Esophagus squamous epithelium (tissue), 5 donors: ENCODE measurements at regions of chr17 and their contacts with region 1.

Region 1: GRCh38 chr17:55356434-55357328 is 65.0 kb downstream of the MMD start:
- DNase-seq: no peak
- H3K4me3 ChIP-seq: no peak overlapping the region
- H3K27ac ChIP-seq: no peak overlapping the region
- H3K4me1 ChIP-seq: no peaks in the 10 kb centered on the region
- H3K27me3 ChIP-seq: no peaks in the 10 kb centered on the region
- CTCF ChIP-seq: peak; percentile 70 to 81 (median 75)
- POLR2A ChIP-seq: no peak

Region 2: GRCh38 chr17:54992797-54993639 is 363.7 kb before region 1 on chr17:
- intact Hi-C with region 1: loop called (anchors 5 kb)
- DNase-seq: no peak
- H3K4me3 ChIP-seq: no peak overlapping the region
- H3K27ac ChIP-seq: no peak overlapping the region
- H3K4me1 ChIP-seq: no peaks in the 10 kb centered on the region
- H3K27me3 ChIP-seq: no peaks in the 10 kb centered on the region
- CTCF ChIP-seq: peak in 5 of 6 experiments; percentile 52 to 73 (median 62)
- POLR2A ChIP-seq: no peak

Region 3: DNA sequence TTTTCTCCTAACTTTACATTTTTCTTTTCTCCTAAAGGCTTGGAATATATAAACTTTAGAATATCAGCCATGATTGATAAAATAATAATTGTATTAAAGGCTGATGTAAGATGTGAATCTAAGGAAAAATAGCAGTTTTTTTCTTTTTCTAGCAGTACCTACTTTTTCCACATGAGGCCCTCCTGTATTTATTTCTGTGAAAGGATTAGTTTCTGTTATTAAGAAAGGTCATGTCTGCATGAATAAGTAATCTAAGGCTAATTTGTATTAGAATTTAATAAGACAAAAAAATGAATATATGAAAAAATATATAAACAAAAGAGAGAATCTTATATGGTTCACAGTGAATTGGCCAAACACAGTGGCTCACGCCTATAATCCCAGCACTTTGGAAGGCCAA is 302.8 kb before region 1 on chr17:
- intact Hi-C with region 1: loop called (anchors 10 kb)
- DNase-seq: no peak
- H3K4me3 ChIP-seq: no peak overlapping the region
- H3K27ac ChIP-seq: no peak overlapping the region
- H3K4me1 ChIP-seq: peaks cover 0 to 35% (median 0%) of the 10 kb centered on the region in 3 donors
- H3K27me3 ChIP-seq: no peaks in the 10 kb centered on the region
- CTCF ChIP-seq: peak in 4 of 6 experiments; percentile 46 to 76 (median 59)
- POLR2A ChIP-seq: no peak

Region 4: DNA sequence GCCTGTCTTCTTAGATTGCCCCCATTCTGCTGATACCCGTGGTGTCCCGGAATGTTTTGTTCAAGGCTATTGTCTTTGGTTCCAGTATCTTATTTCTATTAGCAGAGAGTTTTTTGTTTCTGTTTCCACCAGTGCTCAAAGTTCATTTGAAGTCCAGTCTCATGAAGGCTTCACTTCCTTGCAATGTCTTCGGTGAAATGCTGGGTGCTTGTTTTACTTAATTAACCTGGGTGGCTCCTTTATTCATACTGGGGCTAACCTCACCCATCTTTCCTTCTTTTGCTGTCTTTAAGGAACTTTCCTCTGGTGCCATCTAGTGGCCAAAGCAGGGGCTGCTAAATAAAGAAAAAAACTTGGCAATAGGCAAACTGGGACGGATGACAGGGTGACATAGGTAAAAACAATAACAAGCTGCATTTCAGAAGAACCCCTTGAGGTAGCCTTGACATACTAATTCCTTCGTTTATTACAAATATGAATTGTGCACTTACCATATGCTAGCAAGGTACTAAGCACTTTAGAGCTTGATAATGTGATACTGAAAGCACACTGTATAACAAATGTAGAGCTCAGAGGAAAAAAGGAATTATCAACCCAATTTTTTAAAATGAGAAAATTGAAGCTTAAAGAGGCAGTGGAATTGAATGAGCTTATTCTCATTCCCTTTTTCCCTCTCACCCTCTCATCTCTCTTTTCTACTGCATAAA is 157.4 kb after region 1 on chr17:
- intact Hi-C with region 1: loop called (anchors 10 kb)
- DNase-seq: no peak
- H3K4me3 ChIP-seq: no peak overlapping the region
- H3K27ac ChIP-seq: no peak overlapping the region
- H3K4me1 ChIP-seq: peaks cover 0 to 8% (median 6%) of the 10 kb centered on the region in 3 donors
- H3K27me3 ChIP-seq: no peaks in the 10 kb centered on the region
- CTCF ChIP-seq: peak; percentile 70 to 97 (median 88)
- POLR2A ChIP-seq: no peak

Region 5: GRCh38 chr17:55774846-55775271 is 418.2 kb after region 1 on chr17:
- intact Hi-C with region 1: no loop called
- DNase-seq: no peak
- H3K4me3 ChIP-seq: no peak overlapping the region
- H3K27ac ChIP-seq: no peak overlapping the region
- H3K4me1 ChIP-seq: peaks cover 0 to 16% (median 3%) of the 10 kb centered on the region in 3 donors
- H3K27me3 ChIP-seq: no peaks in the 10 kb centered on the region
- CTCF ChIP-seq: no peak
- POLR2A ChIP-seq: no peak